ENCODE measurements at regions of chr16 and their contacts with region 1.

Region 1: GRCh38 chr16:13402601-13403000 is 501.2 kb downstream of the SHISA9 start:
- DNase-seq: no peak
- CTCF ChIP-seq: no peak

Region 2: DNA sequence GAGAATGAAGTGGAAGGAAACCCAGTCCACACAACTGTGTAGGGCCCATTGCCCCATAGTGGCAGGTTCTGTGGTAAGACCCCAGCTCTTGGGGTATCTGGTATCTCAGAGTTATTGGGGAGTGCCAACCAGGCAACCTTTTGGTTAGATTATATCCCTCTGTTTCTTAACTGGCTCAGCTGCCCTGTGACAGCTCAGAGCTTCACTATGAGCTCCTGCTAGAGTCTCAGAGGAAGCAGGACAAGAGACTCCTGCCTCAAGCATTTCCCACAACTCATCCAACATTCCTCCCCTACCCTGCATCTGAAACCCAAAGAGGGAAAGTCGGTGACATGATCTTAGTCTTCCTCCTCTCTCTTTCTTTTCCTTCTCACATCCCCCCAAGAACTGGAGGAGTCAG is 208.9 kb before region 1 on chr16:
- CTCF ChIA-PET with region 1: no interaction called
- POLR2A ChIA-PET with region 1: interaction called, 12 read pairs
- DNase-seq: no peak
- CTCF ChIP-seq: no peak

Measured in GM10248 (cell line).